Mucosa of descending colon (tissue), 3 donors: ENCODE measurements at regions of chr1 and their contacts with region 1.

Region 1: GRCh38 chr1:94514095-94514727 is 27.3 kb downstream of the F3 start:
- DNase-seq: peak in 1 of 3 donors; percentile 54
- ATAC-seq: peak; percentile 71
- H3K4me3 ChIP-seq: no peak overlapping the region
- H3K4me1 ChIP-seq: no peaks in the 10 kb centered on the region
- CTCF ChIP-seq: no peak

Region 2: GRCh38 chr1:95043141-95043980 is 529.1 kb after region 1 on chr1:
- intact Hi-C with region 1: loop called in 1 of 2 experiments (anchors 10 kb)
- DNase-seq: peak; percentile 73 to 90 (median 84)
- ATAC-seq: peak; percentile 96
- H3K4me3 ChIP-seq: no peak overlapping the region
- H3K4me1 ChIP-seq: no peaks in the 10 kb centered on the region
- CTCF ChIP-seq: peak; percentile 93